OCI-LY7 (cell line): ENCODE measurements at regions of chr12 and their contacts with region 1.

Region 1: DNA sequence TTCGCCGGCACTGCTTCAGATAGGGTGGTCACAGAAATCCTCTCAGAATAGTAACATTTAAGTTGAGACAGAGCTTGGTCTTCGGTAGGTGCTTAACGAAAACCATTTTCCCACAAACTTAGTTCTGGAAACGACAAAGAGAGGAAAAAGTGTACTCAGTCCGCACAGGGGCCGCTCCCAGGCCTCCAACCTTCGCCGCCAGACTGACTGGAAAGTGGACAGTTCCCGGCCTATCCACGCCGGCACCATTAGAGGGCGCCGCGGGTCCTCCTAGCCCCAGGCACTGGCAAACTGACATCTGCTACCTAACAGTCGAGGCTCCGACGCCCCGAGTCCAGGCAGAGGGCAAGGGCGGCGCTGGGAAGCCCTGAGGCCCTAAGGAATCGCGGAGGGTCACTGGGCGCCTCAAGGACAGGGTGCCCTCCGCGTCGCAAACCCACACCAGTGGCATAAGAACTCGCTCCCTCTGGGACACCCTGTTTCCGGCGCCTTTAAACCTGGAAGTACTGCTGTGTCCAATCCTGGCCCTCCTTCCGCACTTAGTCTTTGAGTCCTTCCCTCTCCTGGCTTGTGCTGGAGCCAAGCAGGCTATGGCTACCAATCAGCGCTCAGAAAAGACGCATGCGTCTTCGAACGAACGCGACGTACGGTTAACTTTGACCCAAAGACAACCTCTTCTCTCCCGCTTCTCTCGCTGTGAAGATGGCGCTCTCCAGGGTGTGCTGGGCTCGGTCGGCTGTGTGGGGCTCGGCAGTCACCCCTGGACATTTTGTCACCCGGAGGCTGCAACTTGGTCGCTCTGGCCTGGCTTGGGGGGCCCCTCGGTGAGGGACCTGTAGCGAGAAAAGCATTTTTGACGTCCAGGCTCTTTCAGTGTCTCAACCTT is at the start of gene LETMD1:
- DNase-seq: peak; percentile 98
- H3K4me3 ChIP-seq: peak within 1 kb of the TSS; percentile 83
- H3K27ac ChIP-seq: peak within 1 kb of the TSS; percentile 64
- H3K4me1 ChIP-seq: peaks cover 17% of the 10 kb centered on the region
- CTCF ChIP-seq: peak; percentile 96
- total RNA-seq, gene LETMD1: 53.9 and 58.6 TPM in 2 replicates

Region 2: GRCh38 chr12:51083126-51083833 is 35.4 kb after region 1 on chr12 and contains the start of gene CSRNP2:
- CTCF ChIA-PET with region 1: no interaction called
- POLR2A ChIA-PET with region 1: interaction called, 4 read pairs
- intact Hi-C with region 1: loop called (anchors 1 kb)
- DNase-seq: peak; percentile 95
- H3K4me3 ChIP-seq: peak within 1 kb of the TSS; percentile 90
- H3K27ac ChIP-seq: no peak within 1 kb of the TSS
- H3K4me1 ChIP-seq: peaks cover 23% of the 10 kb centered on the region
- CTCF ChIP-seq: 0 out of 2 replicates have a peak, but pooled peaks have one; percentile 24
- total RNA-seq, gene CSRNP2: 10.4 and 11.7 TPM in 2 replicates

Region 3: GRCh38 chr12:51103977-51104376 is 56.1 kb after region 1 on chr12:
- CTCF ChIA-PET with region 1: no interaction called
- POLR2A ChIA-PET with region 1: no interaction called
- intact Hi-C with region 1: no loop called
- DNase-seq: no peak
- H3K4me3 ChIP-seq: no peak overlapping the region
- H3K27ac ChIP-seq: no peak overlapping the region
- H3K4me1 ChIP-seq: no peaks in the 10 kb centered on the region
- CTCF ChIP-seq: no peak

Region 4: DNA sequence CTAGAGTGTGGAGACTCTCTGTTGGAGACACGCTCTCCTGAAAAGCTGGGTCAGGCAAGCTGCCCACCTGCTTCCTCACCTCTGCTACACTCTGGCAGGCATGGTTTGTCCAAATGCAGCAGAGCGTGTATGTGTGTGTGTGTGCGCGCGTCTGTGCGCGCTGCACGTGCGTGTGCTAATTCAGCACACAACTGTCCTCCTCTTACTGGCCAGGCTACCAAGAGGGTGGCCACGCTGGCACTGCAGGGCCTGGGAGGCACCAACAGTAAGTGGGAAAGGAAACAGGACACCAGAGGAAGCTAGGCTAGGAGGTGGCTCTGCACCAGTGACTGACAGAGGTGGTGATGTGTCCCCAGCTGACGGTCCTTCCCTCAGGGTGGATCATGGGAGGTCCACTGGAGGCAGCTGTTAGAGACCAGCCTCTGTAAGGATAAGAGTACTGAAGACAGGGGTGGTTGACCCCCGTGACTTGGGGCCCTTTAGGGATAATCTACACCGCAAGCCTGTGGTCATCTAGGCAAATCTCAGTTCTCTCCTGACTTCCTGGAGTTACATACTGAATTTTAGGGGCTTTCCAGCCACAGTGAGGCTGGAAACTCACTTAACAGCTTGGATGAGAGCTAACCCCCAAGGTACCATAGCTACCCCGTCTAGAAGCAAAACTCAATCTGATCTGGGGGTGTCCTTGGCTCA is 140.6 kb after region 1 on chr12:
- CTCF ChIA-PET with region 1: no interaction called
- POLR2A ChIA-PET with region 1: interaction called, 3 read pairs
- intact Hi-C with region 1: loop called (anchors 5 kb)
- DNase-seq: peak; percentile 76
- H3K4me3 ChIP-seq: peak overlapping the region; percentile 57
- H3K27ac ChIP-seq: peak overlapping the region; percentile 67
- H3K4me1 ChIP-seq: peaks cover 52% of the 10 kb centered on the region
- CTCF ChIP-seq: no peak

Region 5: DNA sequence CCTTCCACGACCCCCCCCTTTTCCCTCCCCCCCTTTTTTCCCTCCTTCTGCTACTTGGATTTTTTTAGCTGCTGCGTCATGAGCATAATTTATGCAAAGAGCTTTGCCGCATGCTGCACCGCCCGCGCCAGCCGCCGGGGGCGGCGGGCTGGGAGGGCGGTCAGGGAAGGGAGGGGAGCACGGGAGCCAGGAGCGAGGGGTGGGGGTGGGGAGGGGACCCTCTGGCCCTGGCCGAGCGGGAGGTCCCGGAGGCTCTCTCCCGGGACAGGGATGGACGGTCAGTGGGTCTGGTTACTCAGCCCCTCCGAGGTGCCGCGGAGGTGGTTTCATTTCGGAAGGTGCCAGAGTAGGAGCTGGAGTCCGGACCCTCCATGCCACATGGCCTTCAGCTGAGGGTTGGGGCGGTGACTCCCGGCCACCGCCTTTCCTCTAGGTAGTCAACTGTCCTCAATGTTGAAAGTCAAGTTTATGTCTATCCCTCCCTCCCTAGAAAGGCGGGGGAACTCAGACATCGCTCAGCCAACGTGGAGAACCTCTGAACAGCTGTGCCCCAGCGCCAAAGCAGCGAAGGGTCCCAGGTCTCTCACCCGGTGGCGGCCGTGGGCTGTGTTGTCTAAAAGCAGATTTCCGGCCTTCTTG is 170.2 kb after region 1 on chr12 and contains the start of gene POU6F1:
- CTCF ChIA-PET with region 1: no interaction called
- POLR2A ChIA-PET with region 1: no interaction called
- intact Hi-C with region 1: loop called (anchors 1 kb)
- DNase-seq: peak; percentile 83
- H3K4me3 ChIP-seq: peak within 1 kb of the TSS; percentile 69
- H3K27ac ChIP-seq: peak within 1 kb of the TSS; percentile 40
- H3K4me1 ChIP-seq: peaks cover 21% of the 10 kb centered on the region
- CTCF ChIP-seq: peak; percentile 61
- total RNA-seq, gene POU6F1: 1.2 and 2.6 TPM in 2 replicates

Region 6: GRCh38 chr12:51247523-51248206 is 199.8 kb after region 1 on chr12:
- CTCF ChIA-PET with region 1: no interaction called
- POLR2A ChIA-PET with region 1: no interaction called
- intact Hi-C with region 1: loop called (anchors 1 kb)
- DNase-seq: no peak
- H3K4me3 ChIP-seq: no peak overlapping the region
- H3K27ac ChIP-seq: no peak overlapping the region
- H3K4me1 ChIP-seq: peaks cover 20% of the 10 kb centered on the region
- CTCF ChIP-seq: no peak

Region 7: GRCh38 chr12:51341259-51342007 is 293.5 kb after region 1 on chr12:
- CTCF ChIA-PET with region 1: no interaction called
- POLR2A ChIA-PET with region 1: no interaction called
- intact Hi-C with region 1: loop called (anchors 2 kb)
- DNase-seq: peak; percentile 78
- H3K4me3 ChIP-seq: no peak overlapping the region
- H3K27ac ChIP-seq: no peak overlapping the region
- H3K4me1 ChIP-seq: peaks cover 9% of the 10 kb centered on the region
- CTCF ChIP-seq: peak; percentile 99